Keratinocyte (primary cell): ENCODE measurements at regions of chr3 and their contacts with region 1.

Region 1: GRCh38 chr3:139319428-139320402 is 24.1 kb upstream of the MRPS22 start:
- DNase-seq: no peak
- H3K4me3 ChIP-seq: no peak overlapping the region
- H3K27ac ChIP-seq: no peak overlapping the region
- H3K4me1 ChIP-seq: peaks cover 13% of the 10 kb centered on the region
- H3K27me3 ChIP-seq: peaks cover 17% of the 10 kb centered on the region
- CTCF ChIP-seq: peak; percentile 22 to 52 (median 41)

Region 2: GRCh38 chr3:138935848-138936740 is 383.6 kb before region 1 on chr3:
- dilution Hi-C with region 1: loop called (anchors 25 kb)
- DNase-seq: no peak
- H3K4me3 ChIP-seq: peak overlapping the region; percentile 29 to 60 (median 54)
- H3K27ac ChIP-seq: no peak overlapping the region
- H3K4me1 ChIP-seq: peaks cover 13% of the 10 kb centered on the region
- H3K27me3 ChIP-seq: peaks cover 57% of the 10 kb centered on the region
- CTCF ChIP-seq: peak; percentile 57 to 98 (median 90)

Region 3: DNA sequence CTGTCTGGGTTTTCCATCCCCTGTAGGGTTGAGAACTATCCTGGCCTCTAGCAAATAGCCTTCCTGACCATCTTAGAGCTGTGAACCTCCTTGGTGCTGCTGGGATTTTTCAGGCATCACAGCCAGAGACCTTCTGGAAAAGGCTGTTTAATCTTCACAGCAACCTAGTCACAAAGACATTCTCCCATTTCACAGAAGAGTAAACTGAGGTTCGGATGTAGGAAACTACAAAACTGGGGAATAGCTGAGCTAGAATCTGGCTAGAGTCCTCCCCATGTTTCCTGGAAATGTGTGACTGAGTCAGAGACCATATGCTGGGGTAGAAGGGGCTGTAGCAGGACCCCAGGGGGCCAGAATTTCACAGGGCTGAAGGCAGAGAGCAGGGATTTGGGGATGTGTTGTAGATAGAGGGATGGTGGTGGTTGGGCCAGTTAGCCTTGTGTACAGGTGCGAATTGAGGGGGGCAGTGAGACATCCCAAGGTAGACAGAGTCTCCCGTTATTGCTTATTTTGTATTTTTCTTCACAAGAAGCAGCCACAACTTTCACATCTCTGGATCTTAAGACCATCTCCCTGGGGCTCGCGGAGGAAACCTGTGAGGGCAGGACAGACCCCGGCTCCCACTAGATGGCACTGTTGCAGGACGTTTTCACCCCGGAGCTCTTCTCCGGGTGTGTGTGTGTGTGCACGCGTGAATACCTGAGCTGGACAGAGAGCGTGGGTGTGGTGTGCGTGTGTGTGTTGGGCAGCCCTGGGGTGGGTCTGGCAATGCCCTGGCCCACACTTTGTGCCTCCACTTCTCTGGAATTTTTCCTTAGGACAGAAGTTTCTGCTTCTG is 208.1 kb before region 1 on chr3:
- dilution Hi-C with region 1: loop called (anchors 25 kb)
- DNase-seq: no peak
- H3K4me3 ChIP-seq: no peak overlapping the region
- H3K27ac ChIP-seq: no peak overlapping the region
- H3K4me1 ChIP-seq: no peaks in the 10 kb centered on the region
- H3K27me3 ChIP-seq: peaks cover 7% of the 10 kb centered on the region
- CTCF ChIP-seq: peak; percentile 86 to 88 (median 87)